ENCODE measurements at regions of chr10 and their contacts with region 1.

Region 1: DNA sequence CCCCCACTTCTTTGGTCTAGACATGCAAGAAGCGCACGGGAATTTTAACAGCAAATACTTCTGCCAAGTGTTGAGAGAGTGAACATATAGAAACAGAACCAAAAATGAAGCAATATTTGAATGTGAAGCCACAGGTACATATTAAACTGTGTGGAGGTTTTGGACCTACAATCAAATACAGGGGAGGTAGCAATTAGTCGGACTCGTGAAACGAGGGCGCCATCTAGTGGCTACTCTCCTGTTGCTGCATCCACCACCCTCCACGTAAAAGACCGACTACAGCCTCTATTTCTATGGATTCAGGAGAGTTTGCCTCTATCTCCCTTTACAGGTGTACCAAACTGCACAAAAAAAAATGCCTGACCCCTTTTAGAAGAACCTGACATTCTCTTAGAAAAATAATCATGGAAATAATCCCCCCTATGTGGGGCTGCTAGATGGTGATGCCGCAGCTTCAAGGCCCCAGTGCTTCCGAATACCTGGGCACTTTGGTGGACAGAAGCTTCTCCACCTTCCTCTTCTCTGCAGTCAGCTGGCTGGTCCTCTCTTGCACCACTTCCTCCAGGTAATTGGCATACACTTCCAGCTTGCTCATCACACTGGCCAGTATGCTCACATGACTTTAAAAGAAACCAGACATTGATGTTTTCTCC is 31.7 kb downstream of the TECTB start:
- DNase-seq: peak; percentile 72
- ATAC-seq: peak; percentile 95
- H3K4me3 ChIP-seq: no peak overlapping the region
- H3K27ac ChIP-seq: no peak overlapping the region
- H3K4me1 ChIP-seq: peaks cover 0 to 18% of the 10 kb centered on the region in 2 experiments; a peak in 1 of 4 replicates
- H3K27me3 ChIP-seq: no peaks in the 10 kb centered on the region
- CTCF ChIP-seq: peak; percentile 87 to 99 (median 98)
- POLR2A ChIP-seq: no peak
- RAD21 ChIP-seq: peak; percentile 96

Region 2: GRCh38 chr10:111281516-111281915 is 1033.4 kb before region 1 on chr10:
- CTCF ChIA-PET with region 1: no interaction called
- POLR2A ChIA-PET with region 1: no interaction called
- RAD21 ChIA-PET with region 1: no interaction called
- intact Hi-C with region 1: loop called (anchors 2 kb)
- DNase-seq: peak; percentile 4
- ATAC-seq: peak; percentile 83
- H3K4me3 ChIP-seq: no peak overlapping the region
- H3K27ac ChIP-seq: no peak overlapping the region
- H3K4me1 ChIP-seq: no peaks in the 10 kb centered on the region
- H3K27me3 ChIP-seq: peaks cover 19% of the 10 kb centered on the region
- CTCF ChIP-seq: peak; percentile 38 to 61 (median 57); a peak in 5 of 6 replicates
- POLR2A ChIP-seq: no peak
- RAD21 ChIP-seq: peak; percentile 42; the same call in 1 of the 2 replicates

Region 3: DNA sequence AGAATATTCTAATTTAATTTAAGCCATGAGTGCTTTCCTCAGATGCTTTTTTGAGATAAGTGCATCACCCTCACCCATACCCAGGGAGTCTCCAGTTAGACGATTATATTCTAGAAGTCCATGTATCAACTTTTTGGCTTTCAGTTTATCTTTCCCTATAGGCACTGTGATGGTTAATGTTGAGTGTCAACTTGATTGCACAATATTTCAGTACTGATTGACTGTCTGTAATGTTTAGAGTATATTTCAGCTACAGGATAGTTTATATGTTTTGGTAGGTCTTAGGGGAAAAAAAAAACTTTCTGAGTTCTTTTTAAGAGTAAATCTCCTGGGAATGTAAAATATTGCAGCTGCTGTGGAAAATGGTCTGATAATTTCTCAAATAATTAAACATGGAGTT is 702.7 kb before region 1 on chr10:
- CTCF ChIA-PET with region 1: no interaction called
- POLR2A ChIA-PET with region 1: no interaction called
- RAD21 ChIA-PET with region 1: no interaction called
- intact Hi-C with region 1: no loop called
- DNase-seq: no peak
- ATAC-seq: no peak
- H3K4me3 ChIP-seq: no peak overlapping the region
- H3K27ac ChIP-seq: no peak overlapping the region
- H3K4me1 ChIP-seq: no peaks in the 10 kb centered on the region
- H3K27me3 ChIP-seq: peaks cover 5% of the 10 kb centered on the region; the same call in 1 of the 2 replicates
- CTCF ChIP-seq: no peak
- POLR2A ChIP-seq: no peak
- RAD21 ChIP-seq: no peak

Region 4: DNA sequence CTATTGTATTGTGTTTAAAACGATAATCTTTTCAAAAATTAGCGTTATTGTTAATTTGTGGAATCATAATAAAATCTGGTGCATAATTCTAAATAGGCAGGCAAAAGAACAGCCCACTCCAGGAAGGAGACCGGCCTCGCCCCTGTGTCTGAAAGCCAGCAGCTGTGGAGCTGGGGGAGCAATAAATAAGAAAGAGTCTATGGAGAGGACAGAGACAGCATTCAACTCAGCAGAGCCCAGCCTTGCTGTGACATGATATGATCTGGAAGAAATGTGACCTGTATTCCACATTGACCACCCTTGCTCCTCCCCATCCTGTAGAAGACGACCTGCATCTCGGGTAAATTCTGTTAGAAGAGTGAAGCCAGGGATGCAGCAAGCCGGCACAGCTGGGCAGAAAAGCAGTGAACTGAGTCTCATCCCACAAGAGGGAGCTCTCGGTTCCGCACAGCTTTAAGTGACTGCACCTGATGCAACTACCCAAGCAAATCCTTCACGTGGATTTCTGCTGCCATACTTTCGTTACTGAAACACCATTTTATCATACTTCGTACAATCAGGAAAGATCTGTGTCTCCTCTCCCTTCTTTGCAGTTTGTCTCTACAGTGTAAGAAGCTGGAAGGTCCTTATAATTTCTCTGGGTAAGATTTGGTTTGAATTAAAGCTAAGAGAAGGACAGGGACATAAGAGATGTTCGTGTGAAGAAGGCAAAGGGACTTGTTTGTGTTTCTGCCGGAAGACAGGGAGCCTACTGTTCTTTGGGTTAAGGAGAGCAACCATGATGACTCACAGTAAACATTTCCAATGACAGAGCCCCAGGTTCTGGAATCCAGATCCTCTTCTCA is 558.5 kb before region 1 on chr10:
- CTCF ChIA-PET with region 1: no interaction called
- POLR2A ChIA-PET with region 1: no interaction called
- RAD21 ChIA-PET with region 1: no interaction called
- intact Hi-C with region 1: loop called (anchors 1 kb)
- DNase-seq: peak; percentile 79
- ATAC-seq: peak; percentile 98
- H3K4me3 ChIP-seq: no peak overlapping the region
- H3K27ac ChIP-seq: no peak overlapping the region
- H3K4me1 ChIP-seq: peaks cover 0 to 7% of the 10 kb centered on the region in 2 experiments; a peak in 2 of 4 replicates
- H3K27me3 ChIP-seq: peaks cover 8% of the 10 kb centered on the region; the same call in 1 of the 2 replicates
- CTCF ChIP-seq: peak; percentile 63 to 81 (median 70)
- POLR2A ChIP-seq: no peak
- RAD21 ChIP-seq: peak; percentile 76

Region 5: DNA sequence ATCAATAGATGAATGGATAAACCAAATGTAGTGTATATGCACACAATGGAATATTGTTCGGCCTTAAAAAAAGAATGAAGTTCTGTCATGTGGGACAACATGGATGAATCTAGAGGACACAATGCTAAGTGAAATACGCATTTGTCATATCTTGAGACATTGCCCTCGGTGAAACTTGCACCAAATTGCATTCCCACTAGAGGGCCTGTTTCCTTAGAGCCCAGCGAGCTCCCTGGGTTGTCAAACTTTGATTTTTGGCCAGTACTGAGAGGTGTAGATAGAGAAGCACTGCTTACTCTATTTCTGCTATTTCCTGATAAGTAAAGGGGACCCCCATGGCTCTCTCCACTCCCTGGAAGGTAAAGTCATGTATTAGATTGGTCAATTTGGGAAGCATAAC is 288.5 kb before region 1 on chr10:
- CTCF ChIA-PET with region 1: no interaction called
- POLR2A ChIA-PET with region 1: no interaction called
- RAD21 ChIA-PET with region 1: no interaction called
- intact Hi-C with region 1: loop called (anchors 2 kb)
- DNase-seq: peak; percentile 26
- ATAC-seq: peak; percentile 87
- H3K4me3 ChIP-seq: no peak overlapping the region
- H3K27ac ChIP-seq: no peak overlapping the region
- H3K4me1 ChIP-seq: no peaks in the 10 kb centered on the region
- H3K27me3 ChIP-seq: peaks cover 3% of the 10 kb centered on the region; the same call in 1 of the 2 replicates
- CTCF ChIP-seq: peak; percentile 43 to 71 (median 56); a peak in 5 of 6 replicates
- POLR2A ChIP-seq: no peak
- RAD21 ChIP-seq: peak; percentile 47

Region 6: GRCh38 chr10:112115799-112116385 is 199.1 kb before region 1 on chr10:
- CTCF ChIA-PET with region 1: interaction called, 7 read pairs
- POLR2A ChIA-PET with region 1: no interaction called
- RAD21 ChIA-PET with region 1: no interaction called
- intact Hi-C with region 1: loop called (anchors 1 kb)
- DNase-seq: peak; percentile 42
- ATAC-seq: peak; percentile 98
- H3K4me3 ChIP-seq: no peak overlapping the region
- H3K27ac ChIP-seq: no peak overlapping the region
- H3K4me1 ChIP-seq: no peaks in the 10 kb centered on the region
- H3K27me3 ChIP-seq: peaks cover 4% of the 10 kb centered on the region
- CTCF ChIP-seq: peak; percentile 82 to 99 (median 97)
- POLR2A ChIP-seq: no peak
- RAD21 ChIP-seq: peak; percentile 73

Measured in HCT116 (cell line).